Activated naive CD4-positive, alpha-beta T cell treated with anti-CD3 and anti-CD28 coated beads, Interleukin-2, amount 10 ng/mL, durations not matched to agents 7 days and 5 days (primary cell): ENCODE measurements at regions of chr1 and their contacts with region 1.

Region 1: DNA sequence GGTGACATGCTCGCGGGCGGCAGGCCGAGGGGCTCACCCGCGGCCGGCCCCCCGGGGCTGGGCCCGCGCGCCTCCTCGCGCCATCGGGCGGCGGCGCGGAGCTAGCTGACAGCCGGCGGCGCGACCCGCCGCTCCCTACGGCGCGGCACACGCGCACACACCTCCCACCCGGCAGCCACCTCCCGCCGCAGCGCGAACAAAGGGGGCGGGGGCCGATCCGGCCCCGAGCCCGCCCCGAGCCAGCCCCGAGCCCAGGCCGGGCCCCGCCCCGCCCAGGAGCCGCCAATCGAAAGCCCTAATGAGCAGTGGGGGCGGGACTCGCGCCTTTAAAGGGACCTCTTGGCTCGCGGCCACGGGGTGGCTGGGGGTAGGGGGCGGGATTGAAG is at the start of gene KIF21B:
- DNase-seq: peak; percentile 94
- H3K4me3 Mint-ChIP-seq: peak within 1 kb of the TSS; percentile 89
- H3K27ac Mint-ChIP-seq: peak within 1 kb of the TSS; percentile 100
- H3K4me1 Mint-ChIP-seq: peaks cover 75% of the 10 kb centered on the region
- H3K27me3 Mint-ChIP-seq: peaks cover 3% of the 10 kb centered on the region

Region 2: GRCh38 chr1:201009962-201010645 is 13.4 kb before region 1 on chr1:
- CTCF ChIA-PET with region 1: interaction called, 30 read pairs
- DNase-seq: no peak
- H3K4me3 Mint-ChIP-seq: no peak overlapping the region
- H3K27ac Mint-ChIP-seq: peak overlapping the region; percentile 56
- H3K4me1 Mint-ChIP-seq: peaks cover 64% of the 10 kb centered on the region
- H3K27me3 Mint-ChIP-seq: no peaks in the 10 kb centered on the region